MCF 10A (cell line): ENCODE measurements at regions of chr6 and their contacts with region 1.

Region 1: DNA sequence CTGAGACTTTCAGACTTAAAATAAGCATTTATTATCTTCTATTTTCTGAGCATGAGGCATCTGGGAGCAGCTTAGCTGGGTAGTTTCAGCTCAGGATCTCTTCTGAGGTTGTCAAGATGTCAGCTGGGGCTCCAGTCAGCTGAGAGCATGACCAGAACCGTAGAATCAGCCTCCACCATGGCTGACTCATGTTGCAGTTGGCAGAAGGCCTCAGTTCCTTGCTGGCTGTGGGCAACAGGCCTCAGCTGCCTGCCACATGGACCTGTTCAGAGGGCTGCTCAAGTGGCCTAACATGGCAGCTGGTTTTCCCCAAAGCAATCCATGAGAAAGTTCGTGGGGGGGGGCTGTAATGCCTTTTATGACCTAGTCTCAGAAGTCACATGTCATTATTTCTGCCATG is 142.3 kb downstream of the LY86 start:
- DNase-seq: peak; percentile 83
- H3K4me3 Mint-ChIP-seq: no peak overlapping the region
- H3K27ac Mint-ChIP-seq: peak overlapping the region; percentile 84
- H3K4me1 Mint-ChIP-seq: peaks cover 21% of the 10 kb centered on the region
- H3K27me3 Mint-ChIP-seq: no peaks in the 10 kb centered on the region
- CTCF ChIP-seq: no peak

Region 2: DNA sequence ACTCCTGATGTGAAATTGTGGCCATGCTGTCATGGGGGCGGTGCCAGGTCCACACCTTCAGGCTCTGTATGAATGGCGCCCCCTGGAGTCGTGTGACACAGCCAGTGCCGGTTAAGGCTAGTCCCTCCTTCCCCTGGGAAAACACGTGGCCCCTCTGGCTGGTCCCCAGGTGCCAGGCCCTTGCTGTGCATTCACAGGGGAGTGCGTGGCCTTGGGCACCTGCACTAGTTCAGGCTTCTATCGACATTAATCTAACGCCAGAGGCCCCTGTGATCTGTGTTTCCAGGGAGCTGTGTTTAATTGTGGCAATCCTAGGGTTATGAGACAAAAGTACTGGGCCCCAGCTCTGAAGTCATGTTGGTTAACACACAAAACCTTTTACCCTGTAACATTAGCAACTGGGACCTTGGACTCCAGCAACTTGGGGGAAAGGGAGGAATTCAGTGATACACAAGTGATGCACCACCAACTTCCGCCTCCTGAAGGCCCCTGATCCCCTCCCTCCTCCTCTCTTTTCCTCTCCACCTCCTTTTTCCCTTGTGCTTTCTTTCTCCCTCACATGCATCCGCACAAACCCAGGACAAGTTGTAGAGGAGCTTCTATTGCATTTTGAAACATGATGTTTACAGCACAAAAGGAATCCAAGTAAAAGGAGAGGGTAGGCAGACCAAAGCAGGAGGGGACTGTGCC is 508.2 kb after region 1 on chr6:
- CTCF ChIA-PET with region 1: interaction called, 20 read pairs
- POLR2A ChIA-PET with region 1: no interaction called
- intact Hi-C with region 1: no loop called
- DNase-seq: peak; percentile 85
- H3K4me3 Mint-ChIP-seq: no peak overlapping the region
- H3K27ac Mint-ChIP-seq: peak overlapping the region; percentile 41
- H3K4me1 Mint-ChIP-seq: peaks cover 30% of the 10 kb centered on the region
- H3K27me3 Mint-ChIP-seq: no peaks in the 10 kb centered on the region
- CTCF ChIP-seq: peak; percentile 45